ENCODE measurements at regions of chr2 and their contacts with region 1.

Region 1: DNA sequence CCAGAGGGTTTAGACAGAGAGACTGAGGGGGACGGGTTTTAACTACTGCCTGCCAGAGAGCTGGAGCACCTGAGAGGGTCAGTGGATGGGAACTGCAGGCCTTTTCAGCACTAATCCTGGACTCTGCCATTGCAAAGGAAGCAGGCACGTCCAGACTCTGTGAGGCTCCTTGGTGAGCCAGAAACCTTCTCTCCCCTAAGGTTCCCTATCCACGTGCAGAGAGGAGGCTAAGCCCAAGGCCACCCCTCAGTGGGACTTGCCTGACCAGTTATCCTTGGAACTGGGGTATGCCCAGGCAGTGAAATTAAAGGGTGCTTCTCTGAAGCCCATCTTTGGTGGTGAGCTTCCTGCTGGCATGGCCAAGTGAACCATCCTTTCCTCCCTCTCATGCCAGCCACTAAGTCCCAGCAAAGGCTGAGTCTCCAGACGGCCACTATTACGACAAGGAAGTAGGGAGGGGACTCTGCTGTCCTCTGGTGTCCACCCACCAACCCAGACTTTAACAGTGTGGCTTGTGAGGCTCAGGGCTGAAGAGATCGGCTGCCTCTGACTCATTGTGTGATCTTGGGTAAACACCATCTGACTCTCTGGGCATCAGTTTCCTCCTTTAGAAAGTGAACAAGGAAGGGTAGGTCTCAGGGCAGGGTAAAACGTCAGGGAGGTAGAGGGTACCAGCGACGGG is 3.9 kb upstream of the MLPH start:
- DNase-seq: peak; percentile 42
- H3K4me3 ChIP-seq: no peak overlapping the region
- H3K27ac ChIP-seq: no peak overlapping the region
- H3K4me1 ChIP-seq: peaks cover 20% of the 10 kb centered on the region
- H3K27me3 ChIP-seq: no peaks in the 10 kb centered on the region
- CTCF ChIP-seq: peak in 1 of 2 donors; percentile 19

Region 2: DNA sequence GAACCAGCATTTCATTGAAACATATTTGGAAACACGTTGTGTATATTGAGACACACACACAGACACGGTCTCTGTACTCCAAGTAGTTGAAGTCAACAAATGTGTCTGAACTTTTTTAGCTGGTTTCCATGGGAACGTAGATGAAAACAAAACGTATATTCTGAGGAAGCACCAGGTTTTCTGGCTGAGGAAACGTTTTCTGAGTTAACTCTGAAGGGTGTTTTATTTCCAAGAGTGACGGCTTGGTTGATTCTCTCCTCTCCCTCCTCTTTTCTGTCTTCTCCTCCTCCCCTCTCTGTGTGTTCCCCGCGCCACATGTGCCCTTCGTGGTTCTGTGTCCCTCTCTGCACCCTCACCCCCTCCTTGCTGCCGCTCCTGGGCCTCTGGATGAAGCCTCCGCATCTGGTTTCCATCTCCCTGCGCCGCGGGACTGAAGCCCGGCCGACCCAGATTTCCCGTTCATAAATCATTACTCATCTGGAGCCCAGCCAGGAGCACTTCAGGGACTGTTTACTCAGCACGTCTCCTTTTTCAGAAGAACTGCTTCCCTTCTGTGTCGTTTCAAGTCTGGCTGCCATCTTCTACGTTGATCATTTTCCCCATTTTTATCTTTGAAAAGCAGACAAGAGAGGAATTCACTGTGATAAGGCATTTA is 191.9 kb before region 1 on chr2:
- CTCF ChIA-PET with region 1: no interaction called
- dilution Hi-C with region 1: no loop called
- in situ Hi-C with region 1: no loop called
- intact Hi-C with region 1: loop called (anchors 10 kb)
- DNase-seq: peak; percentile 88
- H3K4me3 ChIP-seq: peak overlapping the region in 1 of 3 experiments; percentile 6
- H3K27ac ChIP-seq: peak overlapping the region; percentile 81
- H3K4me1 ChIP-seq: peaks cover 28% of the 10 kb centered on the region
- H3K27me3 ChIP-seq: no peaks in the 10 kb centered on the region
- CTCF ChIP-seq: no peak

Region 3: DNA sequence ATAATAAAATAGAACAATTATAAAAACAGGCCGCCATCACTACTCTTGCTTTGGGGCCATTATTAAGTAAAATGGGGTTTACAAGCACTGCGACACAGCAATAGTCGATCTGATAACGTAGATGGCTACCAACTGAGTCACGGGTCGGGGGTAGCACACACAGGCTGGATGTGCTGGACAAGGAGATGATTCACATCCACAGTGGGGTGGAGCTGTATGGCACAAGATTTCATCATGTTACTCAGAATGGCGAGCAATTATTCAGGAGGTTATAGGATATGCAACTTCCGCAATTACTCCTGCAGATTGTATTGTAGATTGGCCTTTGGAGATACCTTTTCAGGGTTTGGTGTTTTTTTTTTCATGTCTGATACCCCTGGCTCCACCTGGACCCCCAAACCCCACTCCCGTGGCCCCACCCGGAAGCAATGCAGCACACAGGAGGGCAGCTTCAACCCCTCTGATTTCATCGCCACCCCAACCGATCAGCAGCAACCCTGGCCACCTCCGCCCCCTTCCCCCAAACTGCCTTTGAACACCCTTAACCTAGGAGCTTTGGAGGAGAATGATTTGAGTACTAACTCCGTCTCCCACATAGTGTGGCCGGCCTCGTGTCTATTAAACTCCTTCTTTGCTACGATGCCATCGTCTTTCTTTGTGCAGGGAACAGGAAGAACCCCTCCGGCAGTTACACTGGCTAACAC is 17.5 kb before region 1 on chr2:
- CTCF ChIA-PET with region 1: no interaction called
- dilution Hi-C with region 1: no loop called
- in situ Hi-C with region 1: no loop called
- intact Hi-C with region 1: no loop called
- DNase-seq: peak; percentile 85
- H3K4me3 ChIP-seq: no peak overlapping the region
- H3K27ac ChIP-seq: peak overlapping the region; percentile 49
- H3K4me1 ChIP-seq: peaks cover 15% of the 10 kb centered on the region
- H3K27me3 ChIP-seq: no peaks in the 10 kb centered on the region
- CTCF ChIP-seq: no peak